Naive thymus-derived CD4-positive, alpha-beta T cell (primary cell): ENCODE measurements at regions of chr10 and their contacts with region 1.

Region 1: GRCh38 chr10:131094527-131095327 is 216.8 kb downstream of the TCERG1L start:
- DNase-seq: no peak
- ATAC-seq: no peak
- H3K4me3 ChIP-seq: no peak overlapping the region
- H3K4me3 Mint-ChIP-seq: no peak overlapping the region
- H3K27ac ChIP-seq: no peak overlapping the region
- H3K27ac Mint-ChIP-seq: no peak overlapping the region
- H3K4me1 ChIP-seq: no peaks in the 10 kb centered on the region
- H3K4me1 Mint-ChIP-seq: peaks cover 2 to 10% (median 5%) of the 10 kb centered on the region in 7 donors
- H3K27me3 ChIP-seq: no peaks in the 10 kb centered on the region
- H3K27me3 Mint-ChIP-seq: no peaks in the 10 kb centered on the region

Region 2: GRCh38 chr10:131141645-131142505 is 47.1 kb after region 1 on chr10:
- CTCF ChIA-PET with region 1: no interaction called
- POLR2A ChIA-PET with region 1: no interaction called
- intact Hi-C with region 1: no loop called
- DNase-seq: no peak
- ATAC-seq: no peak
- H3K4me3 ChIP-seq: no peak overlapping the region
- H3K4me3 Mint-ChIP-seq: no peak overlapping the region
- H3K27ac ChIP-seq: no peak overlapping the region
- H3K27ac Mint-ChIP-seq: no peak overlapping the region
- H3K4me1 ChIP-seq: no peaks in the 10 kb centered on the region
- H3K4me1 Mint-ChIP-seq: peaks cover 0 to 1% (median 0%) of the 10 kb centered on the region in 7 donors
- H3K27me3 ChIP-seq: no peaks in the 10 kb centered on the region
- H3K27me3 Mint-ChIP-seq: peaks cover 0 to 7% (median 0%) of the 10 kb centered on the region in 5 donors

Region 3: GRCh38 chr10:131312478-131312836 is 217.7 kb after region 1 on chr10:
- CTCF ChIA-PET with region 1: no interaction called
- POLR2A ChIA-PET with region 1: no interaction called
- intact Hi-C with region 1: loop called in 1 of 2 experiments (anchors 10 kb)
- DNase-seq: no peak
- ATAC-seq: no peak
- H3K4me3 ChIP-seq: no peak overlapping the region
- H3K4me3 Mint-ChIP-seq: peak overlapping the region in 3 of 10 donors; percentile 66 to 68 (median 67)
- H3K27ac ChIP-seq: no peak overlapping the region
- H3K27ac Mint-ChIP-seq: no peak overlapping the region
- H3K4me1 ChIP-seq: peaks cover 0 to 4% of the 10 kb centered on the region in 2 donors
- H3K4me1 Mint-ChIP-seq: peaks cover 1 to 16% (median 10%) of the 10 kb centered on the region in 7 donors
- H3K27me3 ChIP-seq: no peaks in the 10 kb centered on the region
- H3K27me3 Mint-ChIP-seq: peaks cover 19 to 66% (median 55%) of the 10 kb centered on the region in 5 donors